HEK293T (cell line): ENCODE measurements at regions of chr6 and their contacts with region 1.

Region 1: GRCh38 chr6:149727793-149728498 is 10.0 kb upstream of the LATS1 start:
- DNase-seq: no peak

Region 2: DNA sequence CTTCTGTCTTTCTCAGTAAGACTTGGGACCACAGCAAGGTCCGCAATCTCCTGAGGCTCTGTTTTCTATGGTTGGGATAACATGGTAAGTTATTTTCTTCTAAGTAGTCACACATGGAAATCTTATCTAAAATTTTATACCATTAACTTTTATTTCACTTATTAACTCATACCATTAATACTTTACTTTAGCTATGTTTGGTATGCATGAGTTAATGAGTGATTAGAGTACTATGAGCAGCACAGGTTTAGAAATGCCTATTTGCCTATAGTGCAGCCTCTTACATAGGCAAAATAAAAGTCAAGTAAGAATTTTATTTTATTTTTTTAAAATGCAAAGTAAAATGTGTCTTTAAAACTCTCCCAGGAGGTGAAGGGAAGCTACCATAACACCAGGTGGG is 134.5 kb before region 1 on chr6:
- CTCF ChIA-PET with region 1: no interaction called
- POLR2A ChIA-PET with region 1: no interaction called
- DNase-seq: no peak

Region 3: GRCh38 chr6:149779644-149779963 is 51.7 kb after region 1 on chr6:
- CTCF ChIA-PET with region 1: interaction called, 10 read pairs
- POLR2A ChIA-PET with region 1: no interaction called
- DNase-seq: no peak